Endothelial cell of umbilical vein (primary cell): ENCODE measurements at regions of chr5 and their contacts with region 1.

Region 1: DNA sequence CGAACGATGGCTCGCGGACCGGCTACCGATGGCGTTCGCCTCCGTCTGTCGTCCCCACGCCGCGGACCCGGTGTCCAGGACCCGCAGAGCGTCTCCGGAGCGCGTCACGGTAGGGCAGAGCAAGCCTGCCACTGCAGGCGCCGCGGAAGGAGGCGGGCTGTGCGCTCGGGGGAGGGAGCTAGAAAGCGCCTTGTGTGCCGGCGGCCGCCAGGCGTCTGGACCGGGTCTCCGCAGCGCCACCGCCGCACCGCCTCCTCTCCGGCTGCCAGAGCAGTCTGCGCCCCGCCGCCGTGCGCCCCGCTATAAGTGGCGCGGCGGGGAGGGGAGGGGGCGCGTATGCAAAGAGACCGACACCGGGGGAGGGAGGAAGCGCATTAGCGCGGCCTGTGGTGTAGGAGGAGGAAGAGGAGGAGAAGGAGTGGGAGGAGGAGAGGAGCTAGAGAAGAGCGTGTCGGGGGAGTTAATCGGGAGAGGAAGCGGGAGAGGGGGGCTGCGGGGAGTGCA is at the start of gene ENC1:
- DNase-seq: peak; percentile 95
- H3K4me3 ChIP-seq: peak within 1 kb of the TSS; percentile 81 to 98 (median 82)
- H3K27ac ChIP-seq: peak within 1 kb of the TSS; percentile 91
- H3K4me1 ChIP-seq: peaks cover 54% of the 10 kb centered on the region
- H3K27me3 ChIP-seq: no peaks in the 10 kb centered on the region
- CTCF ChIP-seq: peak; percentile 16 to 72
- POLR2A ChIP-seq: peak; percentile 99
- total RNA-seq, gene ENC1: 42.2 and 53.6 TPM in 2 replicates

Region 2: DNA sequence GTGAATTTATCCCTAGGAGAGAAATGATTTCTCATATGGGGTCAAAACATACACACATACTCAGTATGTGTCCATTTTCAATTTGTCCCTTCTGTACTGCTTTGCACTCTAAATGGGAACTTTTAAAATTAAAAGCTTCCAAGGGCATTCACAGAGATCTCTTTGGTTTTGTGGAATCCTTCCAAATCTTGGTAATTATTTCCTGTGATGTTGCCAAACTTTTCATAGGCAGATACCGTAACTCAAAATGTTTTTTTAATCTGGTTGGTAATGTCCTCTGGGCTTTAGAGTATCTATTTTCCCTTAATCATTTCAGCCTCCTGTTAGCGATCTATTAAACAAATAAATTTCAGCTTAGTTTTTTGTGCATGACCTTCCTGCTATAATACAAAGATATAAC is 732.1 kb before region 1 on chr5:
- CTCF ChIA-PET with region 1: interaction called, 78 read pairs
- POLR2A ChIA-PET with region 1: interaction called, 5 read pairs
- dilution Hi-C with region 1: no loop called
- intact Hi-C with region 1: no loop called
- DNase-seq: peak; percentile 26
- H3K4me3 ChIP-seq: no peak overlapping the region
- H3K27ac ChIP-seq: no peak overlapping the region
- H3K4me1 ChIP-seq: no peaks in the 10 kb centered on the region
- H3K27me3 ChIP-seq: no peaks in the 10 kb centered on the region
- CTCF ChIP-seq: no peak
- POLR2A ChIP-seq: no peak

Region 3: DNA sequence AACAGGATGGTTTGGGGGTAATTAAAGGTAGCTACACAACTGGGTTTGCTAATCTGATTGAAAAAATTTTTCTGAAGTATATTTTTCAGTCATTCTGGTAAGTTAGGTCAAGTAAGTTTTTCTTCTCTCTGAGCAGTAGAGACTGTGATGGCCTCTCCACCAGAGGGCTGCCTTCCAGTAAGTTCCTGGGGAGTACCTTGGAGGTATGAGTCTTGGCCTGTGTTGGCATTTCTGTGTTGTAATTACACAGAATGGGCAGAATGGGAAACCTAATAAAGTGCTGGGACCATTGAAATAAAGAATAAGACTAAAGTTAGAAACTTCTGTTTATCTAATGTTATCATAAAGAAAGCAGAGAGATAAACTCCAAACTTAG is 583.7 kb before region 1 on chr5:
- CTCF ChIA-PET with region 1: interaction called, 6 read pairs
- POLR2A ChIA-PET with region 1: no interaction called
- dilution Hi-C with region 1: no loop called
- intact Hi-C with region 1: loop called (anchors 2 kb)
- DNase-seq: peak; percentile 64
- H3K4me3 ChIP-seq: no peak overlapping the region
- H3K27ac ChIP-seq: no peak overlapping the region
- H3K4me1 ChIP-seq: no peaks in the 10 kb centered on the region
- H3K27me3 ChIP-seq: no peaks in the 10 kb centered on the region
- CTCF ChIP-seq: peak; percentile 39 to 57
- POLR2A ChIP-seq: no peak

Region 4: DNA sequence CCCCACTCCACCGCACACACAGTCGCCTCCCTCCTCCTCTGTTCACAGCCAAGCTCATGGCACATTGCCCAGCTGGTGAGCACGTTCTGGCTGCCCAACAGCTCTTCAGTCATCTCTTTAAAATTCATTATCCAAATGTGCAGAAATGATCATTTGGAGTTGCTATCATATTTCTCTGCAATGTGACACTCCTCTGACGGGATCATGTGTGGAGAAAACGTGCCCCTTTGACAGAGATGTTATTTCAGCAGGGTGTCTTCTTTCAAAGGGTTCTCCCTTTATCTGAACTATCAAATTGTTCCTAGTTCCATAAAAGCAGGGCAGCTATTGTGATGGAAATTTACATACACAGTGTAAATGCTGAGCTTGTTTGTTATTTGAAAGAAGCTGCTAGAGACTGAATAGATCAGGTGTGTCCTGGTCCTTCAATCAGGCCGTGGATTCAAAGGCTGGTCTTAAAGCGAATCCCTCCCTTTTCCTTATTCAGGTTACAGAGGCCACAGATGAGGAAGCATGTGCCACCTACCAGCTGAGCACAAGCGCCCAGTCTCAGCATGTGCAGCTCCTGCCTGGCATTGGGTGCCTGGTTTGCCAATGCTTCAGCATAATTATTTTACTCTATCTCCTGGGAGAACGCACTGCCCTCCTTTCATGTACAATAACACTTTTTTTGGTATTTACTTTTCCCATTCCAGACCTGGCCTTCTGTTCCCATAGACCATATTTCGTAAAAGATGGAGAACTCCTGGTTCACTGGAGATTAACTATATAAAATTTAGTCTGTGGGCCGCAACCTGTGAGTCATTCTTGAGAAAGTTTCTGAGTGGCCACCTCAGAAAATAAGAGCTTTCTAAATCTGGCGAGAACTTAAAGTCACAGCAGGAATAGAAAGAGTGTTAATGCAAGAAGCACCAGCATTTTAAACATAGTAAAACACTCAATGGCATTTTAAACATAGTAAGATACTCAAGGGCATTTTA is 433.6 kb before region 1 on chr5:
- CTCF ChIA-PET with region 1: interaction called, 27 read pairs
- POLR2A ChIA-PET with region 1: interaction called, 10 read pairs
- dilution Hi-C with region 1: no loop called
- intact Hi-C with region 1: loop called (anchors 1 kb)
- DNase-seq: peak; percentile 85
- H3K4me3 ChIP-seq: no peak overlapping the region
- H3K27ac ChIP-seq: no peak overlapping the region
- H3K4me1 ChIP-seq: peaks cover 10% of the 10 kb centered on the region
- H3K27me3 ChIP-seq: peaks cover 0 to 5% of the 10 kb centered on the region in 2 experiments
- CTCF ChIP-seq: no peak
- POLR2A ChIP-seq: no peak

Region 5: GRCh38 chr5:74326571-74327338 is 313.7 kb before region 1 on chr5:
- CTCF ChIA-PET with region 1: interaction called, 3 read pairs
- POLR2A ChIA-PET with region 1: no interaction called
- dilution Hi-C with region 1: no loop called
- intact Hi-C with region 1: loop called (anchors 5 kb)
- DNase-seq: peak; percentile 89
- H3K4me3 ChIP-seq: no peak overlapping the region
- H3K27ac ChIP-seq: peak overlapping the region; percentile 26
- H3K4me1 ChIP-seq: peaks cover 13% of the 10 kb centered on the region
- H3K27me3 ChIP-seq: peaks cover 0 to 2% of the 10 kb centered on the region in 2 experiments
- CTCF ChIP-seq: no peak
- POLR2A ChIP-seq: no peak

Region 6: GRCh38 chr5:74415695-74416102 is 224.8 kb before region 1 on chr5:
- CTCF ChIA-PET with region 1: interaction called, 13 read pairs
- POLR2A ChIA-PET with region 1: interaction called, 8 read pairs
- dilution Hi-C with region 1: no loop called
- intact Hi-C with region 1: loop called (anchors 1 kb)
- DNase-seq: peak; percentile 90
- H3K4me3 ChIP-seq: no peak overlapping the region
- H3K27ac ChIP-seq: peak overlapping the region; percentile 63
- H3K4me1 ChIP-seq: peaks cover 27% of the 10 kb centered on the region
- H3K27me3 ChIP-seq: no peaks in the 10 kb centered on the region
- CTCF ChIP-seq: no peak
- POLR2A ChIP-seq: peak; percentile 30

Region 7: DNA sequence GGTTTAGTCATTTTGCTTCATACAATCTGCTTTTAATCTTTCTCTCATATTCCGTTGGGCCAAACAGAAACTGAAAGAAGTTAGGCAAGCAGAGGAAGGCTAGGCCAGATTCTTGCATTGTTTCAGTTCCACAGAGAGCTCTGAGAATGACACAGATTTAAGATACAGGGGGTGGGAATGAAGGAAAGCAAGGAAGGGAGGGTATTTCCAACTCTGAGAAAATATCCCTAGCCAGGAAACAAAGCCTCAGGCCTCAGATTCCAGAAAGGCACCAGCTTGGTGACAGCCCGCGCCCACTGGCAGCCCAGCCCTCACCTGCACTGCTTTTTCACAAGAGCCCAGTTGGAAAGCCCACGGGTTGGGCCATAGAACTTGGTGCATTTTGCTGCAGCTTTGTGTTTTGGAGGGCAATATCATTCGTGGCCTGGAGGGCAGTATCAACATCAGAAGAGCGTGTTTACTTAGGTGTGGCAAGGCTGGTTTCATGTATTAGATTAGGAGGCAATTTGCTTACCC is 63.5 kb before region 1 on chr5:
- CTCF ChIA-PET with region 1: interaction called, 21 read pairs
- POLR2A ChIA-PET with region 1: interaction called, 8 read pairs
- dilution Hi-C with region 1: no loop called
- intact Hi-C with region 1: loop called (anchors 1 kb)
- DNase-seq: peak; percentile 79
- H3K4me3 ChIP-seq: peak overlapping the region in 1 of 3 experiments; percentile 27
- H3K27ac ChIP-seq: peak overlapping the region; percentile 73
- H3K4me1 ChIP-seq: peaks cover 29% of the 10 kb centered on the region
- H3K27me3 ChIP-seq: no peaks in the 10 kb centered on the region
- CTCF ChIP-seq: no peak
- POLR2A ChIP-seq: no peak

Region 8: DNA sequence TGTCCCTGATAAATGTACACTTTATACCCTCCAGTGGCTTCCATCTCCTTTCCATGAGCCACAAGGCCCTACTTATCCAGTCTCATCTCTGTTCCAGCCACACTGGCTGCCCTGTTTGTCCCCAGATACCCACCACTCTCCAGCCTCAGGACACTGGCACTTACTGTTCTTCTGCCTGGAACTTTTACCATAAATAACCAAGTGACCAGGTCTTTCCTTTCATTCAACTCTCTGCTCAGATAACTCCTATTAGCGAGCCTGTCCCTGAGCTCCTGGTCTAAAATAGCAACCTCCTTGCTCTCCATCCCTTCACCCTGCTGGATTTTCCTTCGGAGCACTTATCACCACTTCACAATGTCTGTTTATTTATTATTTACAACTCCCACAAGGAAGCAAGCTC is 16.7 kb after region 1 on chr5:
- CTCF ChIA-PET with region 1: no interaction called
- POLR2A ChIA-PET with region 1: no interaction called
- dilution Hi-C with region 1: no loop called
- intact Hi-C with region 1: no loop called
- DNase-seq: no peak
- H3K4me3 ChIP-seq: no peak overlapping the region
- H3K27ac ChIP-seq: no peak overlapping the region
- H3K4me1 ChIP-seq: peaks cover 2% of the 10 kb centered on the region
- H3K27me3 ChIP-seq: no peaks in the 10 kb centered on the region
- CTCF ChIP-seq: no peak
- POLR2A ChIP-seq: no peak